AG04450 (cell line): ENCODE measurements at regions of chr4 and their contacts with region 1.

Region 1: DNA sequence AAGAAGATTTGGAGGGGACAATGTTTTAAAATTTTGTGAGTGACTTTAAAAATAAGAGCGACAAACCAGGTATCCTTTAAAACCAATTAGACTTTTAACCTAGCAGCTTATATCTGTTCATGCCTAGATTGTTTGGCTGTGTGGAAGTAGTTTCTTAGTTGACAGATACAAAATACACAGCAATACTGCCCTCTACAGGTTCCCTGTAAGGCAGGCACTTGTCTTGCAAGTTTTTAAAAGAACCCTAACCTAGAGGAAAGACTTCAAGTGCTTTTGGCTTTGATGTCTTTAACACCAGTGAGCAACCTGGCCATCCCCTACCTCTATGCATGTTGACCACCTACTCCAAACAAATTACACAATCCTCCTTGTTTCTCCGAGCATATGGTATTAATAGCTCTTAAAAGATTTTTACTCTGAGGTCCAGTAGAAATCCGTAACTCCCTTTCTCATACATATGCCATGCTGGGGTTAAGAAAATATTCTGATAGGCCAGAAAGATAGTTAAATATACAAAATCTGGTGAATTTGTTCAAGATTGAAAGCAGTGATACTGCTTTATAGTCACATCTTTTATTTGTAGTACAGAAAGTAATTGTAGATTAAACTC is 273.0 kb downstream of the ARHGAP24 start:
- DNase-seq: peak; percentile 50
- H3K4me3 ChIP-seq: no peak overlapping the region
- H3K27ac ChIP-seq: no peak overlapping the region
- H3K27me3 ChIP-seq: no peaks in the 10 kb centered on the region
- CTCF ChIP-seq: peak; percentile 92

Region 2: DNA sequence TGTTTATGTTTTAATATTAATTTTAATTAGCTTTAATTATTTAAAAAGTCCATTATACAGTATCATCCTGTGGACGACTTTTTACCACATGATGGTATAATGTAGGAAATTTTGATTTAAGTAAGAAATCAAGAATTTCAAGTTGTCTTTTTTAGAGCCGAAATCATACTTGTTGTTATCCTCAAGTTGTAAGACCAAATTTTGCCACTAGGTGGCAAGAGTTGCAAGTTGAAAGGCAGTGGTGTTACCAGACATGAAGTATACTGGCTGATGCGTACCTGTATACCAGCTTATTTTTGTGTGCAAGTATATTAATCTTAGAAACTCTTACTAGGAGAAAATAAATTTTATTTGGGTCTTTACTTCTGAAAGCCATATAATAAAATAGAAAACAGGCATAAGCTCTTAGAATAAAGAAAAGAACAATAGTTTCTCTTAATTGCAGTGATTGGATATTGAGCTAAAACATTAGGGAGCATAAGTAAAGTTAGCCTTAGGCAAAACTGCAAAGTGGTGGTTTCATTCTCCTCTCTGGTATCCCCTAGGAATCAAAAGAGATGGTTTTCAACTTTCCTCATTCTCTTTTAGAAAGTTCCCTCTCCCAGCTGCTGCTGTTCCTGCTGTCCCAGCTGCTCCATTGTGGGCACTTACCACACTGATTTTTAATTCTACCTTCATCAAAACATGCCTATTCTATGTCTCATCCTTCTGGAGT is 663.5 kb before region 1 on chr4:
- CTCF ChIA-PET with region 1: interaction called, 51 read pairs
- POLR2A ChIA-PET with region 1: no interaction called
- DNase-seq: peak; percentile 42
- H3K4me3 ChIP-seq: no peak overlapping the region
- H3K27ac ChIP-seq: no peak overlapping the region
- H3K27me3 ChIP-seq: no peaks in the 10 kb centered on the region
- CTCF ChIP-seq: peak; percentile 79

Region 3: DNA sequence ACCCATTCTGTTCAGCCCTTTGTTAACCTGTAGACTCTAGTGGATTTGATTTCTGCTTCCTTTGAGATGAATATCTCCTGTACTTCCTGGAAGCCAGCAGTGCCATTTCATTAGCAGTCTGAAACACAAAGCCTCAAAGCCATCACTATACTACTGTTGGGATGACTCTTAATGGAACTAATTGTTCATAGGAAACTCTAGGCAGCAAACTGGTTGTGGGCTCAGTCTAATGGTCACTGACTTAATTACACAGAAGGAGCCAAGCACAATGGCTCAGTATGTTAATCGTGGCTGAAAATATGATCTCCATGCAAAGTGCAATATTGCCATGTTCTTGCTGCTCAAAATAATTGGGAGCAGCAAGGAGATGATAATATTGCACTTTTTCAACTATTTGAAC is 10.7 kb before region 1 on chr4:
- CTCF ChIA-PET with region 1: interaction called, 19 read pairs
- POLR2A ChIA-PET with region 1: no interaction called
- DNase-seq: no peak
- H3K4me3 ChIP-seq: no peak overlapping the region
- H3K27ac ChIP-seq: no peak overlapping the region
- H3K27me3 ChIP-seq: no peaks in the 10 kb centered on the region
- CTCF ChIP-seq: no peak

Region 4: DNA sequence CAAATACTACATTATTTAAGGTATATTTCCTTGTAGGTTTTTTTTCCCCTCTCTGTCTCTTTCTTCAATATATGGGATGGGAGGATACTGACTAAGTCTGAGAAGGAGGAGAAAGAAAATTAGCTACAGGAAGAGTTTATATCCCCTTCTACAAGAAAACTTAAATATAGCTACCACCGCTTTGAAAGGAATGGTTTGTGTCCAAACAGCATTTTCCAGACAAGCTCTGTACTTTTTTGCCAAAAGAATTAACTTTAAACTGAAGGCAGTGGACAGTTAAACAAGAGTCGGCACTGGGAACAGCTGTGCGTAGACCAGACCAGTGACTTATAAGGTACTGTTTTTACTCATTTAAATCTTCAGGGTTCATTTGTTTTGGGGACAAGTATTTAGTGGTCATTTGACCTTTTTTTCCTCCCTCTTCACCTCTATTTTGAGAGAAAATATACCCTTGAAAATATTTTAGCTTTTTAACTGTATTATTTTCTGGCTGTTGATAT is 30.7 kb after region 1 on chr4:
- CTCF ChIA-PET with region 1: interaction called, 26 read pairs
- POLR2A ChIA-PET with region 1: no interaction called
- DNase-seq: no peak
- H3K4me3 ChIP-seq: peak overlapping the region; percentile 67
- H3K27ac ChIP-seq: peak overlapping the region; percentile 33
- H3K27me3 ChIP-seq: no peaks in the 10 kb centered on the region
- CTCF ChIP-seq: no peak

Region 5: GRCh38 chr4:85870298-85871083 is 122.5 kb after region 1 on chr4:
- CTCF ChIA-PET with region 1: interaction called, 11 read pairs
- POLR2A ChIA-PET with region 1: no interaction called
- DNase-seq: no peak
- H3K4me3 ChIP-seq: no peak overlapping the region
- H3K27ac ChIP-seq: no peak overlapping the region
- H3K27me3 ChIP-seq: no peaks in the 10 kb centered on the region
- CTCF ChIP-seq: no peak

Region 6: GRCh38 chr4:85986266-85986665 is 238.3 kb after region 1 on chr4:
- CTCF ChIA-PET with region 1: interaction called, 10 read pairs
- POLR2A ChIA-PET with region 1: no interaction called
- DNase-seq: no peak
- H3K4me3 ChIP-seq: no peak overlapping the region
- H3K27ac ChIP-seq: no peak overlapping the region
- H3K27me3 ChIP-seq: no peaks in the 10 kb centered on the region
- CTCF ChIP-seq: no peak